HCT116 (cell line): ENCODE measurements at regions of chr1 and their contacts with region 1.

Region 1: DNA sequence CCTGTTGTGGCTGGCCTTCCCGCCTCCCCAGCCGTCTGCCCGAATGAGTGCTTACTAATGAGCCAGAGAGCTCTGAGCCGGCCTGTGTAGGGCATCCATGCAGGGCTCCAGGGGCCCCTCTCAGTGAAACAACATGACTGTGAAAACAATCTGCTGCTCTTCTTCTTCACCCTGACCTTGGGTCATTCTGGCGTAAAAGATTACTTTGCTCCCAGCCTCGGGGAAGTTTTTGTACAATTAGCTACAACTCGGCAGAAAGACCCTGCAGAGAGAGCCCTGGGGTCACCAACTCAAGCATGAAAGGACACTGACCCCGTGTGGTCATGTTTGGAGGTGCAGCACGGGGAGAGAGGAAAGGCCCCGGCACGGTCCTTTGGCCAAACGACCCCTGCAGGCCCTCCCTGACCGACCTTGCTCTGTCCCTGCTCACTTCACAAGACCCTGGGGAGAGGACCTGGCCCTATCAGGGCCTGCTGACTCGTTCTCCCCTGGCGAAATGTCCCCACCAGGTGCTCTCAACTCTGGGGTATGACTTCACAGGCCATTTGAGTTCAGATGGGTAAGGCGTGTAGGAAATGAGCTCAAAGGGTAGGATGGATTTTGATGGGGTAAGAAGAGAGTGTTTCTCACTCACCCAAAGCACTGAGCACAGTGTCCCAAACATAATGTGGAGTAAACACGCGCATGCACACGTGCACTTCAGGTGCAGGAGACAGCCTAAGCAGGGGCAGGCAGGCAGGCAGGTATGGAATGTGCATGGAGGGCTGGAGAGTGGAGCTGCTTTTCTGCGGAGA is 22.9 kb upstream of the FAM20B start:
- DNase-seq: no peak
- ATAC-seq: peak; percentile 91
- H3K4me3 ChIP-seq: no peak overlapping the region
- H3K27ac ChIP-seq: no peak overlapping the region
- H3K4me1 ChIP-seq: peaks cover 0 to 11% of the 10 kb centered on the region in 2 experiments; a peak in 3 of 4 replicates
- H3K27me3 ChIP-seq: no peaks in the 10 kb centered on the region
- CTCF ChIP-seq: peak; percentile 96 to 97 (median 97)
- POLR2A ChIP-seq: no peak
- RAD21 ChIP-seq: peak; percentile 98

Region 2: GRCh38 chr1:178310685-178311105 is 692.1 kb before region 1 on chr1:
- CTCF ChIA-PET with region 1: interaction called, 23 read pairs
- POLR2A ChIA-PET with region 1: no interaction called
- RAD21 ChIA-PET with region 1: no interaction called
- intact Hi-C with region 1: loop called (anchors 5 kb)
- DNase-seq: peak; percentile 64
- ATAC-seq: peak; percentile 91
- H3K4me3 ChIP-seq: no peak overlapping the region
- H3K27ac ChIP-seq: no peak overlapping the region
- H3K4me1 ChIP-seq: peaks cover 8 to 15% of the 10 kb centered on the region in 2 experiments; a peak in 3 of 4 replicates
- H3K27me3 ChIP-seq: no peaks in the 10 kb centered on the region
- CTCF ChIP-seq: peak; percentile 58 to 88 (median 87)
- POLR2A ChIP-seq: no peak
- RAD21 ChIP-seq: peak; percentile 92

Region 3: GRCh38 chr1:178324003-178324402 is 678.7 kb before region 1 on chr1:
- CTCF ChIA-PET with region 1: no interaction called
- POLR2A ChIA-PET with region 1: no interaction called
- RAD21 ChIA-PET with region 1: no interaction called
- intact Hi-C with region 1: no loop called
- DNase-seq: no peak
- ATAC-seq: no peak
- H3K4me3 ChIP-seq: no peak overlapping the region
- H3K27ac ChIP-seq: no peak overlapping the region
- H3K4me1 ChIP-seq: peaks cover 0 to 6% of the 10 kb centered on the region in 2 experiments; a peak in 1 of 4 replicates
- H3K27me3 ChIP-seq: no peaks in the 10 kb centered on the region
- CTCF ChIP-seq: no peak
- POLR2A ChIP-seq: no peak
- RAD21 ChIP-seq: no peak

Region 4: DNA sequence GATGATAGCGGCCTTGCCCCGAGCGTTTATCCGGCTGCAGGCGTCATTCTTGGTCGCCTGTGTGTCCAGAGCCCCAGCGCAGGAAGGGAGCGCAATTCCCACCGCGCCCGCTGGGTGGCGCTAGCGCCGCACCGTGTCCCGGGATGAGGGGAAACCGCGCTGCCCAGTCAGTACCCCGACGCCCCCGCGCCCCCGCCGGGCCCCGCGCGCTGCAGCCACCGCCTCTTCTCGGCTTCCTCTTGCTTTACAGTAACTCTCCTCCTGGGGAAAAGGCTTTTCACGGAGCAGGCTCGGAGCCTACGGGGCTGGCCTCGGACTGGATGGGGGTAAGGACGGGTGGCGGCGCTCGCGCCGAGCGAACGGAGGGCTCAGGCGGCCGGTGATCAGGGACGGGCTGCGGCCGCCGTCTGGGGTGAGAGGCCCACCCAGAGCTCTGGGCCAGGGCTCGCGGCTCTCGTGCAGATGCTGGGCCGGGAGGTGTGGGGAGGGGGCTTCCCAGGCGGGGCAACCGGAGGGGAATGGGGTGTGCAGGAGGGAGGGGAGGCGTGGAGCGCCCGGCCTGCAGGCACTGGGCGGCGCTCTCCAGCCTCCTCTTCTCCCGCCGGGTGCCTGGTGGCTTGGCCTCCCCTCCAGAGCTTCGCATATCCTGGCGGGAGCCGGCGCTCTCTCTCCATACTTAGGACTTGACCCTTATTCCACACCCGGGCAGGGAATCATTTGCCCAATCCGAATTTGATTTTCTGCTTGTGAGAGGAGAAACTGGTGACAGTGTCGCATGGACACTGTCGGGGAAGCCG is 460.0 kb before region 1 on chr1:
- CTCF ChIA-PET with region 1: interaction called, 42 read pairs
- POLR2A ChIA-PET with region 1: interaction called, 3 read pairs
- RAD21 ChIA-PET with region 1: interaction called, 4 to 10 read pairs
- intact Hi-C with region 1: loop called (anchors 1 kb)
- DNase-seq: peak; percentile 43
- ATAC-seq: peak; percentile 88
- H3K4me3 ChIP-seq: peak overlapping the region; percentile 61 to 69
- H3K27ac ChIP-seq: peak overlapping the region; percentile 64
- H3K4me1 ChIP-seq: peaks cover 17 to 33% of the 10 kb centered on the region in 2 experiments
- H3K27me3 ChIP-seq: no peaks in the 10 kb centered on the region
- CTCF ChIP-seq: peak; percentile 84 to 98 (median 88)
- POLR2A ChIP-seq: no peak
- RAD21 ChIP-seq: peak; percentile 85

Region 5: GRCh38 chr1:178774263-178774662 is 228.5 kb before region 1 on chr1:
- CTCF ChIA-PET with region 1: interaction called, 24 read pairs
- POLR2A ChIA-PET with region 1: no interaction called
- RAD21 ChIA-PET with region 1: interaction called in 1 of 2 experiments, 3 read pairs
- intact Hi-C with region 1: loop called (anchors 1 kb)
- DNase-seq: no peak
- ATAC-seq: no peak
- H3K4me3 ChIP-seq: no peak overlapping the region
- H3K27ac ChIP-seq: no peak overlapping the region
- H3K4me1 ChIP-seq: no peaks in the 10 kb centered on the region
- H3K27me3 ChIP-seq: no peaks in the 10 kb centered on the region
- CTCF ChIP-seq: peak; percentile 7 to 62 (median 47); a peak in 3 of 6 replicates
- POLR2A ChIP-seq: no peak
- RAD21 ChIP-seq: peak; percentile 73

Region 6: GRCh38 chr1:179169616-179170467 is 167.1 kb after region 1 on chr1:
- CTCF ChIA-PET with region 1: no interaction called
- POLR2A ChIA-PET with region 1: no interaction called
- RAD21 ChIA-PET with region 1: no interaction called
- intact Hi-C with region 1: no loop called
- DNase-seq: no peak
- ATAC-seq: peak; percentile 47
- H3K4me3 ChIP-seq: no peak overlapping the region
- H3K27ac ChIP-seq: no peak overlapping the region
- H3K4me1 ChIP-seq: peaks cover 9 to 10% of the 10 kb centered on the region in 2 experiments
- H3K27me3 ChIP-seq: no peaks in the 10 kb centered on the region
- CTCF ChIP-seq: no peak
- POLR2A ChIP-seq: no peak
- RAD21 ChIP-seq: no peak

Region 7: GRCh38 chr1:179478370-179478769 is 475.6 kb after region 1 on chr1:
- CTCF ChIA-PET with region 1: no interaction called
- POLR2A ChIA-PET with region 1: no interaction called
- RAD21 ChIA-PET with region 1: no interaction called
- intact Hi-C with region 1: no loop called
- DNase-seq: no peak
- ATAC-seq: no peak
- H3K4me3 ChIP-seq: no peak overlapping the region
- H3K27ac ChIP-seq: no peak overlapping the region
- H3K4me1 ChIP-seq: no peaks in the 10 kb centered on the region
- H3K27me3 ChIP-seq: no peaks in the 10 kb centered on the region
- CTCF ChIP-seq: no peak
- POLR2A ChIP-seq: no peak
- RAD21 ChIP-seq: no peak

Region 8: GRCh38 chr1:179612361-179612760 is 609.6 kb after region 1 on chr1:
- CTCF ChIA-PET with region 1: no interaction called
- POLR2A ChIA-PET with region 1: no interaction called
- RAD21 ChIA-PET with region 1: no interaction called
- intact Hi-C with region 1: no loop called
- DNase-seq: no peak
- ATAC-seq: no peak
- H3K4me3 ChIP-seq: no peak overlapping the region
- H3K27ac ChIP-seq: no peak overlapping the region
- H3K4me1 ChIP-seq: no peaks in the 10 kb centered on the region
- H3K27me3 ChIP-seq: no peaks in the 10 kb centered on the region
- CTCF ChIP-seq: no peak
- POLR2A ChIP-seq: no peak
- RAD21 ChIP-seq: no peak